PC-9 (cell line): ENCODE measurements at regions of chr7 and their contacts with region 1.

Region 1: GRCh38 chr7:51430480-51431086 is 114.0 kb upstream of the COBL start:
- DNase-seq: peak; percentile 50 to 60
- H3K4me3 ChIP-seq: no peak overlapping the region
- H3K27ac ChIP-seq: no peak overlapping the region
- H3K4me1 ChIP-seq: no peaks in the 10 kb centered on the region
- H3K27me3 ChIP-seq: peaks cover 60% of the 10 kb centered on the region
- CTCF ChIP-seq: peak; percentile 98

Region 2: DNA sequence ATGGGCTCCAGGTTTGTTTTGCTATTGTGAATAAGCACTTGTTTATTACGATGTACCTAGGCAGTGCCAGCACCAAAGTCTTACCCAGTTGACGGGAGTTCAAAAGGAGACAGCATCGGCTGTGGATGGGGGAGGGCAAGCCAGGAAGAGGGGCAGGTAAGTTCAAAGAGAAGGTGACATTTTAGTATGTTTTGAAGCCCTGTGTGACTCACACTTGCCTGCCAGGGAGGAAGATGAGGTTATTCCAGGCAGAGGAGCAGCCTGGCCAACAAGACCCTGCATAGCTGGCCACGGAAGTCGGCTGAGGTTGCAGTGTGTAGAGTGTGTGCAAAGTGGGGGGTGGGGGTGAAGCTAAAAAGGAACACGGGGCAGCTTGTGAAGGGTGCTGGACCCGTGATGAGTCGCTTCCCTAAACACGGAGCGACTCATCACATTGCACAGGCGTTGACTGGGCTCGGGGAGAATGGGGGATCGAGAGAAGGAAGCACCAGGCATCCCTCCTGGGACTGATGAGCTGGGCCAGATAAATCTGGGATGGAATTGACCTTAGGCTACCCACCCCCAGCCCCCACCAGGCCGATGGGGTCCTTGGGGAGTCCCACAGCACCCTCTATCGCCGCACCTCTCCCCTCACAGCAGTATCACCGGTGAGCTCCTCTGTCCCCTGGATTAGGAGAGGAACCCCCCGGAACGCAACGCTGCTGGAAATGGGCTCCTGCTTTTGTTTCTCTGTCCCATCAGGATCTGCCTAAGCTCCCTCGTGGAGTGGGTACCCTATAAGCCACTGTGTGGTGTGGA is 1223.9 kb before region 1 on chr7:
- CTCF ChIA-PET with region 1: interaction called, 7 read pairs
- POLR2A ChIA-PET with region 1: no interaction called
- intact Hi-C with region 1: loop called (anchors 10 kb)
- DNase-seq: no peak
- H3K4me3 ChIP-seq: no peak overlapping the region
- H3K27ac ChIP-seq: no peak overlapping the region
- H3K4me1 ChIP-seq: no peaks in the 10 kb centered on the region
- H3K27me3 ChIP-seq: peaks cover 69% of the 10 kb centered on the region
- CTCF ChIP-seq: no peak

Region 3: GRCh38 chr7:50212011-50212325 is 1218.6 kb before region 1 on chr7:
- CTCF ChIA-PET with region 1: interaction called, 12 read pairs
- POLR2A ChIA-PET with region 1: no interaction called
- intact Hi-C with region 1: loop called (anchors 10 kb)
- DNase-seq: no peak
- H3K4me3 ChIP-seq: no peak overlapping the region
- H3K27ac ChIP-seq: no peak overlapping the region
- H3K4me1 ChIP-seq: no peaks in the 10 kb centered on the region
- H3K27me3 ChIP-seq: peaks cover 95% of the 10 kb centered on the region
- CTCF ChIP-seq: no peak

Region 4: GRCh38 chr7:51366930-51367613 is 63.5 kb before region 1 on chr7:
- CTCF ChIA-PET with region 1: no interaction called
- POLR2A ChIA-PET with region 1: no interaction called
- intact Hi-C with region 1: loop called (anchors 5 kb)
- DNase-seq: peak; percentile 54 to 61
- H3K4me3 ChIP-seq: no peak overlapping the region
- H3K27ac ChIP-seq: no peak overlapping the region
- H3K4me1 ChIP-seq: peaks cover 7% of the 10 kb centered on the region
- H3K27me3 ChIP-seq: no peaks in the 10 kb centered on the region
- CTCF ChIP-seq: peak; percentile 96

Region 5: GRCh38 chr7:52260046-52260665 is 829.6 kb after region 1 on chr7:
- CTCF ChIA-PET with region 1: no interaction called
- POLR2A ChIA-PET with region 1: no interaction called
- intact Hi-C with region 1: loop called (anchors 10 kb)
- DNase-seq: no peak
- H3K4me3 ChIP-seq: no peak overlapping the region
- H3K27ac ChIP-seq: no peak overlapping the region
- H3K4me1 ChIP-seq: no peaks in the 10 kb centered on the region
- H3K27me3 ChIP-seq: peaks cover 6% of the 10 kb centered on the region; the same call in 1 of the 2 replicates
- CTCF ChIP-seq: peak; percentile 55

Region 6: GRCh38 chr7:52917982-52918578 is 1487.5 kb after region 1 on chr7:
- CTCF ChIA-PET with region 1: no interaction called
- POLR2A ChIA-PET with region 1: no interaction called
- intact Hi-C with region 1: loop called (anchors 2 kb)
- DNase-seq: no peak
- H3K4me3 ChIP-seq: no peak overlapping the region
- H3K27ac ChIP-seq: no peak overlapping the region
- H3K4me1 ChIP-seq: no peaks in the 10 kb centered on the region
- H3K27me3 ChIP-seq: peaks cover 6% of the 10 kb centered on the region; the same call in 1 of the 2 replicates
- CTCF ChIP-seq: peak; percentile 75